Naive thymus-derived CD4-positive, alpha-beta T cell (primary cell): ENCODE measurements at regions of chr5 and their contacts with region 1.

Region 1: DNA sequence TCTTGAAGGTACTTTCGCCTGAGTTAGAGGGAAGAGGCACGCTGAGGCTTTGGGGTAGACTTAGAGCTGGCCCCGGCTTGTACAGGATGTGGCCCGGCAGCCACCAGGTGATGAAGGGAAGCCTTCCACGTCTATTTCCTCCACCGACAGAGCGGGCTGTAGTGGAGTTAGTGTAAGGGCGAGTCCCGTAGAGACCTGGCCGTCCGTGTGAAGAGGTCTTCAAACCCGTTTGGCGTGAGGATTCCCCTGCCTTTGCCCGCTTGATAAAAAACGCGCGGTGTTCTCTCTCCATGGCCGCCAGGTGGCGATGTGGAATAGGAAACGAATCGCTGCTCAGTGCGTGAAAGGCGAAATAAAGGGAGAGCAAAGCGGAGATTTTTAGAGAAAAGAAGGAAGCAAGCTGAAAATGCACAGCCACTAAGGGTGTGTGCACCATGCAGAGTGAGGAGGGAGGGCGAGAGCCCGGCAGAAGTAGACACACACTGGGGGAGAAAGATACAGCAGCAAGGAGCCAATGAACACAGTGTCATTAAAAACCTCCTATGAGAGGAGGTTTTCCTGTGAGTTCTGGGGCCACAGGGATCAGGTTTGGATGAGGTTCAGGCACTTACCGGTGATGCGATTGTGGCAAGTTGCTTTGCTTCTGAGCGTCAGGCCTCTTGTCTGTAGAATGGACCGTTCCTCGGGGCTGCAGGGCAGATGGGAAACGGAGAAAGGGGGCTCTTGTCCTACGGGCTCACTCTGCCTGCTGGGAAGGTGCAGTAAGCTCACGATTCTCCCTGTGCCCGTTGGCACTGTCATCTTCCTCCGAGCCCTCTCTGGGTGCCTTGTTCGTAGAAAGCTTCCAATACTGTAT is 34.2 kb downstream of the STC2 start:
- DNase-seq: peak; percentile 34 to 75 (median 58)
- ATAC-seq: peak; percentile 78
- H3K4me3 ChIP-seq: peak overlapping the region; percentile 34
- H3K4me3 Mint-ChIP-seq: peak overlapping the region; percentile 24 to 88 (median 75)
- H3K27ac ChIP-seq: no peak overlapping the region
- H3K27ac Mint-ChIP-seq: no peak overlapping the region
- H3K4me1 ChIP-seq: peaks cover 4 to 11% of the 10 kb centered on the region in 2 donors
- H3K4me1 Mint-ChIP-seq: peaks cover 11 to 18% (median 13%) of the 10 kb centered on the region in 7 donors
- H3K27me3 ChIP-seq: no peaks in the 10 kb centered on the region
- H3K27me3 Mint-ChIP-seq: peaks cover 45 to 63% (median 52%) of the 10 kb centered on the region in 5 donors

Region 2: GRCh38 chr5:173016621-173017047 is 277.4 kb before region 1 on chr5:
- CTCF ChIA-PET with region 1: interaction called, 10 read pairs
- POLR2A ChIA-PET with region 1: no interaction called
- intact Hi-C with region 1: no loop called
- DNase-seq: no peak
- ATAC-seq: no peak
- H3K4me3 ChIP-seq: no peak overlapping the region
- H3K4me3 Mint-ChIP-seq: no peak overlapping the region
- H3K27ac ChIP-seq: no peak overlapping the region
- H3K27ac Mint-ChIP-seq: peak overlapping the region in 8 of 9 donors; percentile 37 to 87 (median 62)
- H3K4me1 ChIP-seq: no peaks in the 10 kb centered on the region
- H3K4me1 Mint-ChIP-seq: peaks cover 20 to 70% (median 58%) of the 10 kb centered on the region in 7 donors
- H3K27me3 ChIP-seq: no peaks in the 10 kb centered on the region
- H3K27me3 Mint-ChIP-seq: no peaks in the 10 kb centered on the region

Region 3: DNA sequence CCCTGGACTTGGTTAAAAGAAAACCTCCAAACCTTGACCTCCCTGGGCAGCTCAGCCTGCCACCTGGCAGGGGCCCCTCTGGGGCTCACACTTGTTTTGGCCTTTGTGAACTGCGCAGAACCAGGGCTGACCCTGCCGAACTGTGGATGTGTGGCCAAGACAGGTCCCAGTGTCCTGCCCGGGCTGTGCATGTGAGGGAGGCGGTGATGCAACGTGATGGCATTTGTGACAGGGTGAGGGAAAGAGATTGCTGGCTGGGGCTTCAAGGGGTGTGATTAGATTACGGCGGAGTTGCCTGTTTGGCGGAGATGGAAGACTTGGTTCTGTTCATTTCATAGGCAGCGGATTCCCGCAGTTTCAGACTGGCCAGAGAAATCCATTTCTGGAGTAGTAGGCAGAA is 28.6 kb before region 1 on chr5:
- CTCF ChIA-PET with region 1: no interaction called
- POLR2A ChIA-PET with region 1: no interaction called
- intact Hi-C with region 1: no loop called
- DNase-seq: no peak
- ATAC-seq: no peak
- H3K4me3 ChIP-seq: no peak overlapping the region
- H3K4me3 Mint-ChIP-seq: no peak overlapping the region
- H3K27ac ChIP-seq: no peak overlapping the region
- H3K27ac Mint-ChIP-seq: no peak overlapping the region
- H3K4me1 ChIP-seq: no peaks in the 10 kb centered on the region
- H3K4me1 Mint-ChIP-seq: no peaks in the 10 kb centered on the region
- H3K27me3 ChIP-seq: no peaks in the 10 kb centered on the region
- H3K27me3 Mint-ChIP-seq: peaks cover 21 to 50% (median 32%) of the 10 kb centered on the region in 5 donors

Region 4: GRCh38 chr5:173371400-173371799 is 77.4 kb after region 1 on chr5:
- CTCF ChIA-PET with region 1: no interaction called
- POLR2A ChIA-PET with region 1: no interaction called
- intact Hi-C with region 1: no loop called
- DNase-seq: no peak
- ATAC-seq: no peak
- H3K4me3 ChIP-seq: no peak overlapping the region
- H3K4me3 Mint-ChIP-seq: no peak overlapping the region
- H3K27ac ChIP-seq: no peak overlapping the region
- H3K27ac Mint-ChIP-seq: no peak overlapping the region
- H3K4me1 ChIP-seq: no peaks in the 10 kb centered on the region
- H3K4me1 Mint-ChIP-seq: no peaks in the 10 kb centered on the region
- H3K27me3 ChIP-seq: no peaks in the 10 kb centered on the region
- H3K27me3 Mint-ChIP-seq: peaks cover 5 to 53% (median 30%) of the 10 kb centered on the region in 5 donors

Region 5: GRCh38 chr5:173573126-173573960 is 279.3 kb after region 1 on chr5:
- CTCF ChIA-PET with region 1: no interaction called
- POLR2A ChIA-PET with region 1: no interaction called
- intact Hi-C with region 1: loop called (anchors 1 kb)
- DNase-seq: peak in 8 of 9 donors; percentile 33 to 71 (median 56)
- ATAC-seq: peak; percentile 83
- H3K4me3 ChIP-seq: no peak overlapping the region
- H3K4me3 Mint-ChIP-seq: peak overlapping the region in 7 of 10 donors; percentile 1 to 62 (median 32)
- H3K27ac ChIP-seq: no peak overlapping the region
- H3K27ac Mint-ChIP-seq: no peak overlapping the region
- H3K4me1 ChIP-seq: no peaks in the 10 kb centered on the region
- H3K4me1 Mint-ChIP-seq: peaks cover 5 to 10% (median 6%) of the 10 kb centered on the region in 7 donors
- H3K27me3 ChIP-seq: peaks cover 0 to 6% of the 10 kb centered on the region in 2 donors
- H3K27me3 Mint-ChIP-seq: peaks cover 16 to 28% (median 23%) of the 10 kb centered on the region in 5 donors

Region 6: DNA sequence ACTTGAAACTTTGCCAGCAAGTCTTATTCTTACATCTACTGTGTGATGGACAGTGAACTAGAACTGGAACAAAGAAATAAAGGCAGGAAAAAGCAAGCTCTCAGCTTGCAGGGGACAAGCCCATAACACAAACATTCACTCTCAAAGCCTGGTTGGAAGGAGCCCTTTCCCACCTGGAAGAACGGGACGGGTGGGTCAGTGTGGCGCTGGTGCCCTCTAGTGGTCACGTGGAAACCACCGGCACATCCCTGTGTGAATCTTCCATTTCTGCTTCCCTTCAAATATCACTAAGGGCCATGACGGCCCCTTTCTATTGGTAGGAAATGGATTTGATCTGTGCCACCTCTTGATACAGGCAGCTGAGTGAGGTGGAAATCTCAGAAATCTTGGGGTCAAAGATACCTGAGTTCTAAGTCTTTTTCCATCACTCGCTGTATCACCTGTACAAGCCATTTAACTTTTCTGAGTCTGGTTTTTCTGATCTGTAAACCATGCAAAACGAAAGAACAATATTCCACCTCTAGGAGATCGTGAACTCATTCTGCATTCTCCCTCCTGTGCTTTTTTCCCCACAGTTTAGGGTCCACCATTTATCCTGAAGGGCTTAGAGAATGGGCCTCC is 1641.9 kb after region 1 on chr5:
- CTCF ChIA-PET with region 1: interaction called, 3 read pairs
- POLR2A ChIA-PET with region 1: no interaction called
- intact Hi-C with region 1: loop called in 1 of 2 experiments (anchors 2 kb)
- DNase-seq: peak in 5 of 9 donors; percentile 6 to 35 (median 20)
- ATAC-seq: peak; percentile 51
- H3K4me3 ChIP-seq: no peak overlapping the region
- H3K4me3 Mint-ChIP-seq: no peak overlapping the region
- H3K27ac ChIP-seq: no peak overlapping the region
- H3K27ac Mint-ChIP-seq: no peak overlapping the region
- H3K4me1 ChIP-seq: no peaks in the 10 kb centered on the region
- H3K4me1 Mint-ChIP-seq: no peaks in the 10 kb centered on the region
- H3K27me3 ChIP-seq: peaks cover 0 to under 1% of the 10 kb centered on the region in 2 donors
- H3K27me3 Mint-ChIP-seq: peaks cover 2 to 51% (median 38%) of the 10 kb centered on the region in 5 donors